GM12878 (cell line): ENCODE measurements at regions of chr20 and their contacts with region 1.

Region 1: DNA sequence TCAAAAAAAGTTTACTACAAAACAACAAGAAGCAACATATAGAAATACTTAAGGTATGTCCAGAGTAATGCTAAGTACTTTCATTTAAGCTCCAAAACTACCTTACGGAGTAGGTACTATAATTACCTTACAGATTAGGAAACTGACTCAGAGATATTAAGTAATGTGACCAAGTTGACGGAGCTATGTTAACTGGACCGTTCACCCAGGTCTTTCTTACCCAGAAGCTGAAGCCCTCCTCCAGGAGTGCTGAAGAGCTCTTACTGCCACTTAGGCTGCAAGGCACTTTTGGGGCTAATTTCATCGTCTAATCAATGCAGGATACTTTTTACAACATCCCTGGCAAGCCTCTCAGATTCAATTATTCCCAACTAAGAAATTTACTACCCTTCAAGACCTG is 123.7 kb downstream of the CHD6 start:
- DNase-seq: no peak
- ATAC-seq: no peak
- H3K4me3 ChIP-seq: no peak overlapping the region
- H3K27ac ChIP-seq: no peak overlapping the region
- H3K4me1 ChIP-seq: no peaks in the 10 kb centered on the region
- H3K27me3 ChIP-seq: no peaks in the 10 kb centered on the region
- CTCF ChIP-seq: no peak
- EP300 ChIP-seq: no peak
- POLR2A ChIP-seq: no peak
- RAD21 ChIP-seq: no peak

Region 2: GRCh38 chr20:41352108-41352507 is 142.3 kb before region 1 on chr20:
- CTCF ChIA-PET with region 1: no interaction called
- POLR2A ChIA-PET with region 1: no interaction called
- RAD21 ChIA-PET with region 1: no interaction called
- SMC1A ChIA-PET with region 1: no interaction called
- in situ Hi-C with region 1: no loop called
- intact Hi-C with region 1: no loop called
- DNase-seq: no peak
- ATAC-seq: peak; percentile 44; the same call in 2 of the 3 replicates
- H3K4me3 ChIP-seq: no peak overlapping the region
- H3K27ac ChIP-seq: no peak overlapping the region
- H3K4me1 ChIP-seq: no peaks in the 10 kb centered on the region
- H3K27me3 ChIP-seq: no peaks in the 10 kb centered on the region
- CTCF ChIP-seq: no peak
- EP300 ChIP-seq: no peak
- POLR2A ChIP-seq: no peak
- RAD21 ChIP-seq: no peak

Region 3: DNA sequence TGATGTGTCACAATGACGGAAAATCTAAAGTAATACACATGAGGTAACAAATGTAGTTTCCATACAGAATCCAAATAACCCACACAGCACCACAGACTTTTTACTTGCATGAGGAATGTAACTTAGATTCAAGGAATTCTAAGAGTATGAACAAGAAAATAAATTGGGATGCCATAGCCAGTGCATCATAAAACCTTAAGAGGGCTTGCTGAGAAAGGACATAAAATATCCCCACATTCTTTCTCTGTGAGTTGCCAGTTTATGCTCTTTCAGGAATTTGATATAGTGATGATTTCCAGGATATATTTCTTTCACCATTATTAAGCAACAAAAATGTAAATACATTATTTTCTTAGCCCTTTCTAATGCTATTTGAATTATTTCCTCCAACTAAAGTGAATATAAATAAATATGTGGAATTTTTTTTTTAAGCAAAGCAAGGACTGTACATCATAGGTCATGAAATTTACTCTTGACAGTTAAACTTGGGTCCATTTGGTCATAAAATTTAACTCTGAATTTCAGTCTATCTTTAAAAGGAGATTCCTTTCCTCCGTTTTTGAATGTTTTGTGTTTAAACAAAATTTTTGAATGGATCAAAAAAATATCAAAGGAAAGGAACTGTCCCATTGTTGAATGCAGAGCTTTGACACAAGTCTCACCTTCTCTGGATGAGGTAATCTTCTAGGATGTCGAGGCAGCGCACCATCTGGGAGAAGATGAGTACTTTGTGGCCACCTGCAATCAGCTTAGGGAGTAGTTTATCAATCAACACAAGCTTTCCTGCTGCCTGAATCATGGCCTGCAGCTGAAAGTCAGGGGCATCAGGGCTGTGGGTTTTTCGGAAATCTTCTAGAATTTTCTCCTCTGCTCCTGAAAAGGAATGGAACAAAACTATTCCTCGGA is 11.6 kb before region 1 on chr20:
- CTCF ChIA-PET with region 1: interaction called, 3 read pairs
- POLR2A ChIA-PET with region 1: no interaction called
- RAD21 ChIA-PET with region 1: no interaction called
- SMC1A ChIA-PET with region 1: interaction called, 10 read pairs
- in situ Hi-C with region 1: no loop called
- intact Hi-C with region 1: no loop called
- DNase-seq: no peak
- ATAC-seq: no peak
- H3K4me3 ChIP-seq: no peak overlapping the region
- H3K27ac ChIP-seq: no peak overlapping the region
- H3K4me1 ChIP-seq: no peaks in the 10 kb centered on the region
- H3K27me3 ChIP-seq: no peaks in the 10 kb centered on the region
- CTCF ChIP-seq: no peak
- EP300 ChIP-seq: no peak
- POLR2A ChIP-seq: no peak
- RAD21 ChIP-seq: no peak